ENCODE measurements at regions of chr19 and their contacts with region 1.

Region 1: DNA sequence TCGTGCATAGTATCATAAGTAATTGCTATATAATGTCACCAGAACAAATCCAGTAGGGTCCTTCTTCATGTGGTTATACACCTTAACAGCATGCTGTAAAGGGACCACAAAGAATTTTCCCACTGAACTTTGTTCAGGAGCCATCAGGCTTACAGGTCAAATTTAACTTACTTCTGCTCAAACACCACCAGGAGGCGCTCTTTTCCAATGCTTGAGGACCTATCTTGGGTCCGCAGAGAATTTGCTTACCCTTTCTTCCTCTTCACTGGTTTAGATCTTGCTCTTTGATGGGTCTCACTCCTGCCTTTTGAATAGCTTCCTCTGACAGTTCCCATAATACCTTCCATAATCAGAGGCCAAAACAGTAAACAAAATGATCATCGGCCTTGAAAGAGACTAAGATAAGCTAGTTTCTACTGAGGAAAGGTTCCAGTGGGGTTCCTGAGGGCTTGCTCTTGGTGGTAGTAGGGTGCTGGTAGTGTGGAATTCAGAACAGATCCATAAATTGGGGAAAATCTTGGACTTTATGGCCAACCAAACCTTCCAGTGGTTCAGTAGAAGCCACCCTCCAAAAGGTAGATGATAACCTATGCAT is 37.4 kb downstream of the SCGB2B2 start:
- DNase-seq: peak; percentile 36 to 88
- ATAC-seq: peak; percentile 74 to 93; a peak in 5 of 6 replicates
- H3K4me3 ChIP-seq: no peak overlapping the region
- H3K27ac ChIP-seq: no peak overlapping the region
- H3K4me1 ChIP-seq: no peaks in the 10 kb centered on the region
- CTCF ChIP-seq: peak; percentile 93
- EP300 ChIP-seq: no peak
- POLR2A ChIP-seq: no peak
- RAD21 ChIP-seq: peak; percentile 87 to 95

Region 2: DNA sequence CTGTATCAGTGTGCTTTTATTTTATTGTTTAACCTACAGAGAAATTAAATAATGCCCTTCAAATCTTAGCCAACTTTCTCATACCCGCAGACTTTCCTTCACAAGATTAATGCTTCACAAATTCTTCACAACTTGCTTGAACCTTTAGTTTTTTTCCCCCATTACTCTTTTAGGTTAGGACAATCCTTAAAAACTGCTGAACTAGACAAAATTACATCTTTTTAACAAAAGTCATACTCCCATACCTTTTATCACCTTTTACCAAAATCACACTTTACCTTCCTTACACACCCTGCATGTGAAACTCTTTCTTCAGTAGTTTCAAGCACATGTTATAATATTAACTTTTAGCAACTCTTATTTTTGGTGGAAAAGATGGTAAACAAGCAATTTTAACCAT is 21.2 kb before region 1 on chr19:
- CTCF ChIA-PET with region 1: interaction called, 10 read pairs
- POLR2A ChIA-PET with region 1: no interaction called
- DNase-seq: no peak
- ATAC-seq: no peak
- H3K4me3 ChIP-seq: no peak overlapping the region
- H3K27ac ChIP-seq: no peak overlapping the region
- H3K4me1 ChIP-seq: no peaks in the 10 kb centered on the region
- CTCF ChIP-seq: no peak
- EP300 ChIP-seq: no peak
- POLR2A ChIP-seq: no peak
- RAD21 ChIP-seq: no peak

Region 3: GRCh38 chr19:34654796-34655195 is 15.2 kb after region 1 on chr19:
- CTCF ChIA-PET with region 1: interaction called, 37 read pairs
- POLR2A ChIA-PET with region 1: no interaction called
- DNase-seq: no peak
- ATAC-seq: no peak
- H3K4me3 ChIP-seq: no peak overlapping the region
- H3K27ac ChIP-seq: no peak overlapping the region
- H3K4me1 ChIP-seq: no peaks in the 10 kb centered on the region
- CTCF ChIP-seq: no peak
- EP300 ChIP-seq: no peak
- POLR2A ChIP-seq: no peak
- RAD21 ChIP-seq: no peak

Region 4: GRCh38 chr19:34712395-34713261 is 73.0 kb after region 1 on chr19:
- CTCF ChIA-PET with region 1: interaction called, 38 read pairs
- POLR2A ChIA-PET with region 1: no interaction called
- DNase-seq: peak; percentile 77 to 90
- ATAC-seq: peak; percentile 75 to 95; a peak in 5 of 6 replicates
- H3K4me3 ChIP-seq: no peak overlapping the region
- H3K27ac ChIP-seq: no peak overlapping the region
- H3K4me1 ChIP-seq: no peaks in the 10 kb centered on the region
- CTCF ChIP-seq: peak; percentile 93
- EP300 ChIP-seq: no peak
- POLR2A ChIP-seq: no peak
- RAD21 ChIP-seq: peak; percentile 94 to 97

Measured in A549 (cell line).